Caco-2 (cell line): ENCODE measurements at regions of chr22 and their contacts with region 1.

Region 1: DNA sequence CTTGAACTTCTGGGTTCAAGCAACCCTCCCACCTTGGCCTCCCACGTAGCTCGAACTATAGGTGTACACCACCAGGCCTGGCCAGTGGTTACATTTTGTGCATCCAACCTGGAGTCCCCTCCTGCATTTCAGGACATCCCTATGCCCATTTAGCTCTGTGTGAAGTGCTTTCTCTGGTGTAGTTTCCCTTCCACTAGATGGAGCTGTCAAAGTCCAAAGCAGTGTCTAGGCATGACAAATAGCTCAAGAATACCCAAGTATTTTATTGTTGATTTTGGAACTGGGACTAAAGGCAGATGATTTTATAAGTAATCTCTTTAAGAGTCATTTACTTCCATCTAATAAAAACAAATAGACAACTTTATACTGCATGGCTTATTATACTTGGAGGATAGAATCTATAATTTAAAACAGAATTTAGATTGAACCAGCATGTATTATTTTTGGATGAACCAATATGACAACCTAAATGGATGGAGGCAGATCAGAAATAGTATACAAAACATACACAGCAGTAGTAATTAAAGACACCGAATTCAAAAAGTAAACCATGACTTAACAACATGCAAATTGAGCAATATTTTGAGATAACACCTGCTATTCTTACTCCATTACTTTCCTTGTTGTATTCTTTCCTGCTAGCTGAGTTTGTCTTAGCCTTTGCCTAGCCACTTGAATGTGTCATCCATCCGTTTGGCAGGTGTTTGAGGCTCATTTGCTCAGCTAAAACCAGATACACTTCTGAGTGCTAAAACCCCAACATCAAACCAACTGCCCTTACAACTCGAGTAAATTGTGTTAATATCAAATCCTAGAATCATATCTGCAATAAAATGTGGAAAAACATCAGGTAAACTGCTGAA is 37.7 kb downstream of the EIF4ENIF1 start:
- DNase-seq: peak in 1 of 2 experiments; percentile 49
- H3K4me3 ChIP-seq: no peak overlapping the region
- H3K4me3 Mint-ChIP-seq: no peak overlapping the region
- H3K27ac Mint-ChIP-seq: no peak overlapping the region
- H3K4me1 ChIP-seq: no peaks in the 10 kb centered on the region
- H3K4me1 Mint-ChIP-seq: no peaks in the 10 kb centered on the region
- H3K27me3 ChIP-seq: no peaks in the 10 kb centered on the region
- H3K27me3 Mint-ChIP-seq: no peaks in the 10 kb centered on the region
- CTCF ChIP-seq: peak in 1 of 2 experiments; percentile 72

Region 2: GRCh38 chr22:31439808-31440207 is 12.1 kb before region 1 on chr22:
- CTCF ChIA-PET with region 1: interaction called, 13 read pairs
- POLR2A ChIA-PET with region 1: no interaction called
- intact Hi-C with region 1: no loop called
- DNase-seq: no peak
- H3K4me3 ChIP-seq: no peak overlapping the region
- H3K4me3 Mint-ChIP-seq: no peak overlapping the region
- H3K27ac Mint-ChIP-seq: peak overlapping the region; percentile 32
- H3K4me1 ChIP-seq: no peaks in the 10 kb centered on the region
- H3K4me1 Mint-ChIP-seq: no peaks in the 10 kb centered on the region
- H3K27me3 ChIP-seq: no peaks in the 10 kb centered on the region
- H3K27me3 Mint-ChIP-seq: no peaks in the 10 kb centered on the region
- CTCF ChIP-seq: no peak

Region 3: DNA sequence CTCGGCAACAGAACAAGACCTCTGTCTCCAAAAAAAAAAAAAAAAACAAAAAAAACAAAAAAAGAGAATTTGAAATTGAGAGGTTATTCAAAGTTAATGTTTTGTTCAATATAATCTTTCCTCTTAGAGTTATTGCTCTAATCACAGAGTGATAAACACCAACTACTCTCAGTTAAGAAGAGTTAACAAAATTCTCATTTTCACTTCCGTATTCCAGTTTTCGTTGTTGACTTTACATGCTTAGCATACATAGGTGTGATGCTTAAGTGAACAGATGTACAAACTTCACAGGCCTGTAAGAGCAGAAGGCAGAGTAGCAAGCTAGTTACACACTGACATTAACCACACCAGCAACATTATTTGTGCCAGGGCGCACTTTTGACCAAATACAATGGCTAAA is 25.4 kb after region 1 on chr22:
- CTCF ChIA-PET with region 1: no interaction called
- POLR2A ChIA-PET with region 1: no interaction called
- intact Hi-C with region 1: no loop called
- DNase-seq: no peak
- H3K4me3 ChIP-seq: no peak overlapping the region
- H3K4me3 Mint-ChIP-seq: no peak overlapping the region
- H3K27ac Mint-ChIP-seq: no peak overlapping the region
- H3K4me1 ChIP-seq: no peaks in the 10 kb centered on the region
- H3K4me1 Mint-ChIP-seq: no peaks in the 10 kb centered on the region
- H3K27me3 ChIP-seq: no peaks in the 10 kb centered on the region
- H3K27me3 Mint-ChIP-seq: no peaks in the 10 kb centered on the region
- CTCF ChIP-seq: no peak

Region 4: DNA sequence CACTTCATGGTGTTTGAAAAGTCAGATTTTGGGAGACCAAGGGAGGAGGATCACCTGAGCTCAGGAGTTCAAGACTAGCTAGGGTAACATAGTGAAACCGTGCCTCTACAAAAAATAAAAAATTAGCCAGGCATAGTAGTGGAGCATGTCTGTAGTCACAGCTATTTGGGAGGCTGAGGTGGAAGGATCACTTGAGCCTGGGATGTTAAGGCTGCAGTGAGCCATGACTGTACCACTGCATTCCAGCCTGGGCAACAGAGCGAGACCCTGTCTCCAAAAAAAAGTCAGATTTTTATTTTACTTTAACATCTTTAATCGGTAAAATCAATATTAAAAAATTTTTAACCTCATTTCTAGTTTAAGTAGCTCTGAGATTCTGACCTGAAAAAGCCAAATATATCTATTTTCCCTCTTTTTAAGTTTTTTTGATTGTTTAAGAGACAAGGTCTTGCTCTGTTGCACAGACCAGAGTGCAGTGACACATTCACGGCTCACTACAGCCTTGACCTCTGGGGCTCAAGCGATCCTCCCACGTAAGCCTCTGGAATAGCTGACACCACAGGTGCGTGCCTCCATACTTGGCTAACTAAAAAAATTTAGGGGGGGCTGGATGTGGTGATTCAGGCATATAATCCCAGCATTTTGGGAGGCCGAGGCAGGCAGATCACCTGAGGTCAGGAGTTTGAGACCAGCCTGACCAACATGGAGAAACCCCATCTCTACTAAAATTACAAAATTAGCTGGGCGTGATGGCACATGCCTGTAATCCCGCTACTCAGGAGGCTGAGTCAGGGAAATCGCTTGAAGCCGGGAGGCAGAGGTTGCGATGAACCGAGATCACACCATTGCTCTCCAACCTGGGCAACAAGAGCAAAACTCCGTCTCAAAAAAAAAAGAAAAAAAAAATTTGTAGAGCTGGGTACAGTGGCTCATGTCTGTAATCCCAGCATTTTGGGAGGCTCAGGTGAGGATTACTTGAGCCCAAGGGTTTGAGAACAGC is 92.8 kb after region 1 on chr22:
- CTCF ChIA-PET with region 1: no interaction called
- POLR2A ChIA-PET with region 1: no interaction called
- intact Hi-C with region 1: no loop called
- DNase-seq: no peak
- H3K4me3 ChIP-seq: no peak overlapping the region
- H3K4me3 Mint-ChIP-seq: no peak overlapping the region
- H3K27ac Mint-ChIP-seq: no peak overlapping the region
- H3K4me1 ChIP-seq: no peaks in the 10 kb centered on the region
- H3K4me1 Mint-ChIP-seq: no peaks in the 10 kb centered on the region
- H3K27me3 ChIP-seq: no peaks in the 10 kb centered on the region
- H3K27me3 Mint-ChIP-seq: no peaks in the 10 kb centered on the region
- CTCF ChIP-seq: no peak

Region 5: DNA sequence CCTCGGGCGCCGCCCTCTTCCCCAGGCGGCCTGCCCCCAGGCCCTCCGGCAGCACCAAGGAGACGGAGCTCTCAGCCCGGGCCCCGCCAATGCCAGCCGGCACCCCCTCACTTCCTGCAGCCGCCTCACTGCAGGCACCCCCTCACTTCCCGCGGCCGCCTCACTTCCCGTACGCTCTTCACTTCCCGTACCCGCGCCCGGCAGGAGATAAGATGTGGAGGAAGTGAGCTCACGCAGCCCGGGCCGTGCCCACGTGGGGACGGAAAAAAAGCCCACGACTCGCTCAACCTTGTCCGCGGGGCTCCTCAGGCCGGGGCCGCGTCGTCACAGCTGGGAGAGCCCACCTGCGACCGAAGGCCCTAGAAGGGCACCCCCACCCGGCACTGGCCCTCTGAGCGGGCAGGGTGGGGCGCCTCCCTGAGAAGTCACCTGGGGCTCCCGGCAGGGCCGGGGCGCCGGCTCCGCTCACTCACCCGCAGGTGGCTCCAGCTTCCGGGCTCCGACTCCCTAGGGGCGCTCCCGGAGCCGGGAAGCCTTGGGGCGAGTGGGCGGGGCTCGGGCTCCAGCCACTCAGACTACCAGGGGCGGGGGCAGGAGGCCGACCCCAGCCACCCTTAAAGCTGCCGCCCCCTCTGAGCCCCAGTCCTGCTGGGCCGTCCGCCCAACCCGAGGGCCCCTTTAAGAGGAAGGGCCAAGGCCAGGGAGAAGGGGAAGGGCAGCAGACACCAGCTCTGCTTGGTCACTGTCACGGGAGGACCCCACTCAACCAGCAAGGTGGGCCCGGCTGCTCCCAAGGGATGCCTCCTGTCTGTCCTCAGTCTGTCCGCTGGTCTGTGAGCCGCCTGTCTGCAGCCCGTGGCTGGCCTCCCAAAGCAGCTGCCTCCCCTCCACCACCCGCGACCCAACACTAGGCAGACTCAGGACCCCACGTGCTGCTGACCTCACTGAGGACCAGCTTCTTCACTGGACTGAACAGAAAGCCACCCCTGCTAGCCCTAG is 178.7 kb after region 1 on chr22:
- CTCF ChIA-PET with region 1: interaction called, 10 read pairs
- POLR2A ChIA-PET with region 1: no interaction called
- intact Hi-C with region 1: no loop called
- DNase-seq: peak; percentile 88 to 92
- H3K4me3 ChIP-seq: peak overlapping the region; percentile 60
- H3K4me3 Mint-ChIP-seq: peak overlapping the region; percentile 80
- H3K27ac Mint-ChIP-seq: peak overlapping the region; percentile 29
- H3K4me1 ChIP-seq: peaks cover 36% of the 10 kb centered on the region
- H3K4me1 Mint-ChIP-seq: peaks cover 29% of the 10 kb centered on the region
- H3K27me3 ChIP-seq: no peaks in the 10 kb centered on the region
- H3K27me3 Mint-ChIP-seq: no peaks in the 10 kb centered on the region
- CTCF ChIP-seq: no peak